Tibial artery (tissue), 4 donors: ENCODE measurements at regions of chr1 and their contacts with region 1.

Region 1: GRCh38 chr1:212488397-212489283 is 55.9 kb downstream of the NENF start:
- DNase-seq: peak; percentile 84 to 87
- H3K4me3 ChIP-seq: no peak overlapping the region
- H3K27ac ChIP-seq: peak overlapping the region; percentile 58 to 59
- H3K4me1 ChIP-seq: peaks cover 4 to 27% (median 9%) of the 10 kb centered on the region in 4 donors
- H3K27me3 ChIP-seq: no peaks in the 10 kb centered on the region
- CTCF ChIP-seq: no peak

Region 2: GRCh38 chr1:212566522-212567479 is 78.2 kb after region 1 on chr1:
- intact Hi-C with region 1: no loop called
- DNase-seq: peak in 1 of 2 donors; percentile 39
- H3K4me3 ChIP-seq: peak overlapping the region; percentile 56 to 59
- H3K27ac ChIP-seq: peak overlapping the region; percentile 71 to 76
- H3K4me1 ChIP-seq: peaks cover 0 to 24% (median 17%) of the 10 kb centered on the region in 4 donors
- H3K27me3 ChIP-seq: no peaks in the 10 kb centered on the region
- CTCF ChIP-seq: no peak

Region 3: DNA sequence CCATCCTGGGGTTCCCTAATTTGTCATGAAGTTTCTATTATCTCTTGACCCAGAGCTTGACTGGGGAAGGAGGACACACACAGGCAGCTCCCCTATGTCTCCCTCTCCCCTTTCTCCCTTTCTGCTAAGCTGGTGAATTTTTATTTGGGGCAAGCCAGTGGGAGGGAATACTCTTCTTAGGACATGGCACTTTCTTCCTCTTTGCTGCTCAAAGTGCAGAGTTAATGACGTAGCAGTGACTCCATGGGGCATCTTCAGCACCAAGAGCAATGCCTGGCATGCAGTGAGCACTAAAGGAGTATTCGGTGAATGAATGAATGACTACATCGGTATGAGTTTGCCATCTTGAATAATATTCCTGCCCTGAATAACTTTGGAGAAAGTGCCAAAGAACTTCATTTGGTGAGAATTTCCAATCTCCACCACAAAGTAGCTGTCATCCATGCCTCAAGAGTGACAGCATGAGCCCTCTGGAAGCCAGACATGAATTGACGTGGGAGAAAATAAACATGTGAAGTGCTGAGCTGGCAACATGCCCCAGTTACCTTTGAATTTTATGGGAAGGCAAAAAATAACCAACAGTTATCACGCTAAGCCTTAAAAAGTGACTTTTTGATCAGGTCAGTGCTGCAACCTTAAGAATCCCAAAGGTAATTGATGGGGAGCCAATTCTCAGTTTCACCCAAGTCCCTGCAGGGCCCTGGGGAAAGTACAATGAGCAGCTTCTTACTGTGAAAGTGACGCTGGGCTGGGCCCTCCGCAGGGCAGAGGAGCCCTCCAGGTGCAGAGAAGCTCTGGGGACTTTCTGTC is 97.8 kb after region 1 on chr1:
- intact Hi-C with region 1: no loop called
- DNase-seq: no peak
- H3K4me3 ChIP-seq: no peak overlapping the region
- H3K27ac ChIP-seq: no peak overlapping the region
- H3K4me1 ChIP-seq: peaks cover 0 to 13% (median 0%) of the 10 kb centered on the region in 4 donors
- H3K27me3 ChIP-seq: peaks cover 0 to 22% of the 10 kb centered on the region in 2 donors
- CTCF ChIP-seq: no peak

Region 4: GRCh38 chr1:212699104-212699624 is 210.5 kb after region 1 on chr1:
- intact Hi-C with region 1: loop called (anchors 10 kb)
- DNase-seq: peak; percentile 33 to 69
- H3K4me3 ChIP-seq: peak overlapping the region; percentile 57 to 86
- H3K27ac ChIP-seq: peak overlapping the region; percentile 88 to 90
- H3K4me1 ChIP-seq: peaks cover 0 to 24% (median 13%) of the 10 kb centered on the region in 4 donors
- H3K27me3 ChIP-seq: no peaks in the 10 kb centered on the region
- CTCF ChIP-seq: peak in 1 of 2 experiments; percentile 55

Region 5: GRCh38 chr1:213154056-213154685 is 665.5 kb after region 1 on chr1:
- intact Hi-C with region 1: no loop called
- DNase-seq: no peak
- H3K4me3 ChIP-seq: no peak overlapping the region
- H3K27ac ChIP-seq: peak overlapping the region; percentile 50 to 67
- H3K4me1 ChIP-seq: peaks cover 0 to 50% (median 13%) of the 10 kb centered on the region in 4 donors
- H3K27me3 ChIP-seq: no peaks in the 10 kb centered on the region
- CTCF ChIP-seq: no peak